GM10248 (cell line): ENCODE measurements at regions of chr13 and their contacts with region 1.

Region 1: GRCh38 chr13:23570099-23570920 is at the start of gene TNFRSF19:
- DNase-seq: no peak
- CTCF ChIP-seq: no peak

Region 2: DNA sequence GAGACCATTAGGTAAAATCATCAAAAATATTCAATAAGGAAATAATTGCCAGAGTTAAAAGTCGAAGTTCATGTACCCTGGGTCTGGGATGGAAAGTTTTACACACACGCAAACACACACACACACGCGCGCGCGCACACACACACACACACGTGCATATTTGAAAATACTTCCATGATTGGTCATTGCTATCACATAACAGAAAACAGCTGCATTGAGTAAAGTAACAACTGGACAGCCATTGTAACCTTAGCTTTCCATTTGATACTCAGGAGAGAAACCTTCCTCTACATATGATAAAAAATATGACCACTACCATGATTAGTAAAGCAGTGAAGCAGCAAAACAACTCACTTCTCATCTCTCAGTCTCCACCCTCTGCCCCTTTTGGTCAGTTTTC is 879.6 kb before region 1 on chr13:
- CTCF ChIA-PET with region 1: no interaction called
- POLR2A ChIA-PET with region 1: no interaction called
- DNase-seq: no peak
- CTCF ChIP-seq: no peak

Region 3: GRCh38 chr13:23510979-23511735 is 59.2 kb before region 1 on chr13:
- CTCF ChIA-PET with region 1: interaction called, 81 read pairs
- POLR2A ChIA-PET with region 1: interaction called, 3 read pairs
- DNase-seq: peak; percentile 58
- CTCF ChIP-seq: peak; percentile 60

Region 4: GRCh38 chr13:23558675-23559536 is 11.4 kb before region 1 on chr13:
- CTCF ChIA-PET with region 1: interaction called, 22 read pairs
- POLR2A ChIA-PET with region 1: interaction called, 8 read pairs
- DNase-seq: no peak
- CTCF ChIP-seq: no peak

Region 5: GRCh38 chr13:23921451-23921888 is 351.2 kb after region 1 on chr13:
- CTCF ChIA-PET with region 1: no interaction called
- POLR2A ChIA-PET with region 1: no interaction called
- DNase-seq: no peak
- CTCF ChIP-seq: peak; percentile 52